Calu3 (cell line): ENCODE measurements at regions of chr11 and their contacts with region 1.

Region 1: DNA sequence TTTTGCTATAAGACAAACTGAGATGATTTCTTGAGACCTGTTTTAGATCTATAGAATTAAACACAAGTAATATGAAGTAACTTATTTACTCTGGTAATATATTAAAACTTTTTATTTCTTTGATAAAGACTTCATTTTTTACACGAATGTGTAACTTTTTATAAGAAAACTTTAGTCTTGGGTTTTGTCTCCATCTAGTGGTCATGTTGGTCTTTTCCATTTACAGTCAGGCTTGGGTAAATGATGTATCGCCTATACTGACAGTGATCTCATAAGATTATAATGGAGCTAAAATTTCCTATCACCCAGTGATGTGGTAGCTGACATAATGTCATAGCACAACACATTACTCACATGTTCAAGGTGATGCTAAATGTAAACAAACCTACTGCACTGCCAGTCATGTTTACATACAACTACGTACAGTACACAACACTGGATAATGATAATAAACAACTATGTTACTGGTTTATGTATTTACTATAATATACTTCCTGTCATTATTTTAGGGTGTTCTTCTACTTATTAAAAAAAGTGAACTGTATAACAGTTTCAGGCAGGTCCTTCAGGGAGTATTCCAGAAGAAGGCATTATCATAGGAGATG is 7.5 kb upstream of the C11orf97 start:
- DNase-seq: no peak
- H3K4me3 Mint-ChIP-seq: no peak overlapping the region
- H3K27ac Mint-ChIP-seq: no peak overlapping the region
- H3K4me1 Mint-ChIP-seq: no peaks in the 10 kb centered on the region
- H3K27me3 Mint-ChIP-seq: no peaks in the 10 kb centered on the region
- CTCF ChIP-seq: peak; percentile 36

Region 2: GRCh38 chr11:93234602-93235207 is 1270.1 kb before region 1 on chr11:
- CTCF ChIA-PET with region 1: no interaction called
- intact Hi-C with region 1: loop called (anchors 10 kb)
- DNase-seq: peak; percentile 66
- H3K4me3 Mint-ChIP-seq: no peak overlapping the region
- H3K27ac Mint-ChIP-seq: no peak overlapping the region
- H3K4me1 Mint-ChIP-seq: peaks cover 8% of the 10 kb centered on the region
- H3K27me3 Mint-ChIP-seq: peaks cover 53% of the 10 kb centered on the region
- CTCF ChIP-seq: peak; percentile 49

Region 3: DNA sequence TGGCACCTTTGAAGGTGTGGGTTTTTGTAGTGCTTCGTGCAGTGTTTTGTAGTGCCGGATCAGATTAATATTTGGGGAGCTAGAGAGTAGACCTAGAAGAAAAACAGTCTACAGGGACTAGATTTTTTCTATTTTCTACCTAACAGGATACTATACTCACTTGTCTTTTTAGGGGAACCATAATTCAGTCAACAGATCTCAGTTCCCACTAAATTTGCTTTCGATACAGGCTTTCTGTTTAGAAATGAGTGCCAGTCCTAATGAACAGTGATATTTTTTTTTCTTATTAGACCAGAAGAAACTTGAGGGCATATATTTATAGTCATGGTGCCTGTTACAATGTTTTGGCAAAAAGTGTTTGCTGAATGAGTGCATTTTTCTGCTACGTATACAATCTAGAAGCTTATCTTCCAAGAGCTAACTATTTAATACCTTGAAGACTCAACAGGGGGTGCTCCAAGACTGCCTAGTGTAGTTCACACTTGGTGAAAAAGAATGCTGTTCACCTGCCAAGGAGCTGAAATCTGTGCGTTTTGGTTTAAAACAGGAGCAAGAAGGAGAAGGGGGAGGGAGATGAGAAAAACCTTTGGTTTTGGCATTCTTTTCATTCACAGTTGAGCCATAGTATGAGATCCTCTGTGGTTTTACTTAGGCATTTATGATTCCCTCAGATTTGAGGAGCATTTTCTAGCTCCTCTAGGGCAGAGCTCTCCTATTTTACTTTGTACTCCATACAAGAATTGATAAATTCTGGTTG is 609.5 kb before region 1 on chr11:
- CTCF ChIA-PET with region 1: interaction called, 8 read pairs
- intact Hi-C with region 1: loop called (anchors 1 kb)
- DNase-seq: peak; percentile 32
- H3K4me3 Mint-ChIP-seq: no peak overlapping the region
- H3K27ac Mint-ChIP-seq: no peak overlapping the region
- H3K4me1 Mint-ChIP-seq: no peaks in the 10 kb centered on the region
- H3K27me3 Mint-ChIP-seq: peaks cover 37% of the 10 kb centered on the region
- CTCF ChIP-seq: no peak

Region 4: GRCh38 chr11:94183886-94184264 is 320.9 kb before region 1 on chr11:
- CTCF ChIA-PET with region 1: no interaction called
- intact Hi-C with region 1: loop called (anchors 5 kb)
- DNase-seq: peak; percentile 69
- H3K4me3 Mint-ChIP-seq: no peak overlapping the region
- H3K27ac Mint-ChIP-seq: no peak overlapping the region
- H3K4me1 Mint-ChIP-seq: no peaks in the 10 kb centered on the region
- H3K27me3 Mint-ChIP-seq: no peaks in the 10 kb centered on the region
- CTCF ChIP-seq: peak; percentile 65

Region 5: DNA sequence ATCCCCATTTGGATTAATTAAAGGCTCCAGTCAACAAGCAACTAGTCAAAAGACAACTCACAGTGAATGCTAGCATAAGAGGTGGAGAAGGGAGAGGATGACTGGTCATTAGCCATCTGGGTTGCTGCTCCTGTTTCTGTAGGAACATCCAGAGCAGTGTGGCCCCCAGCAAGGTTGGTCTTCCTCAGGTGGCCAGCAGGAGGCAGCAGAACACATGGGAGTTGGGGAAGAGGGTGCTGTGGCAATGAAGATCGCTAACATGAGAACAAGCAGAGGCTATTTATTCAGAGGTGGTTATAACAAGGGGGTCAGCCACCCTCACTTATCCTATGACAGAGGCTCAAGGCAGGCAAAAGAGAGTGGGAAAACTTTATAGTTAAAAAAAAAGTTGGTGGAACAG is 179.1 kb before region 1 on chr11:
- CTCF ChIA-PET with region 1: no interaction called
- intact Hi-C with region 1: loop called (anchors 5 kb)
- DNase-seq: peak; percentile 54
- H3K4me3 Mint-ChIP-seq: no peak overlapping the region
- H3K27ac Mint-ChIP-seq: no peak overlapping the region
- H3K4me1 Mint-ChIP-seq: no peaks in the 10 kb centered on the region
- H3K27me3 Mint-ChIP-seq: peaks cover 40% of the 10 kb centered on the region
- CTCF ChIP-seq: peak; percentile 28